H1 (cell line): ENCODE measurements at regions of chr2 and their contacts with region 1.

Region 1: GRCh38 chr2:182866461-182867406 is at the start of gene FRZB:
- DNase-seq: peak; percentile 17 to 77
- H3K4me3 ChIP-seq: peak within 1 kb of the TSS; percentile 48 to 68 (median 54)
- H3K27ac ChIP-seq: no peak within 1 kb of the TSS
- H3K4me1 ChIP-seq: peaks cover 3 to 14% (median 7%) of the 10 kb centered on the region in 4 experiments; a peak in 6 of 7 replicates
- H3K27me3 ChIP-seq: peaks cover 2 to 19% (median 12%) of the 10 kb centered on the region in 4 experiments
- CTCF ChIP-seq: no peak
- EP300 ChIP-seq: no peak
- POLR2A ChIP-seq: no peak
- RAD21 ChIP-seq: no peak; a peak in 1 of 4 replicates
- total RNA-seq, gene FRZB: 4.6 and 4.7 TPM in 2 replicates

Region 2: GRCh38 chr2:182763311-182763912 is 103.3 kb before region 1 on chr2:
- CTCF ChIA-PET with region 1: interaction called, 15 read pairs
- POLR2A ChIA-PET with region 1: interaction called, 3 read pairs
- DNase-seq: no peak
- H3K4me3 ChIP-seq: no peak overlapping the region
- H3K27ac ChIP-seq: no peak overlapping the region
- H3K4me1 ChIP-seq: no peaks in the 10 kb centered on the region
- H3K27me3 ChIP-seq: no peaks in the 10 kb centered on the region
- CTCF ChIP-seq: peak in 2 of 3 experiments; percentile 64; a peak in 3 of 4 replicates
- EP300 ChIP-seq: no peak
- POLR2A ChIP-seq: no peak
- RAD21 ChIP-seq: peak; percentile 40 to 59; a peak in 3 of 4 replicates

Region 3: GRCh38 chr2:182784777-182785176 is 82.0 kb before region 1 on chr2:
- CTCF ChIA-PET with region 1: interaction called, 71 read pairs
- POLR2A ChIA-PET with region 1: no interaction called
- DNase-seq: no peak
- H3K4me3 ChIP-seq: no peak overlapping the region
- H3K27ac ChIP-seq: no peak overlapping the region
- H3K4me1 ChIP-seq: no peaks in the 10 kb centered on the region
- H3K27me3 ChIP-seq: no peaks in the 10 kb centered on the region
- CTCF ChIP-seq: peak in 2 of 3 experiments; percentile 43 to 55; a peak in 2 of 4 replicates
- EP300 ChIP-seq: no peak
- POLR2A ChIP-seq: no peak
- RAD21 ChIP-seq: peak; percentile 77 to 78

Region 4: DNA sequence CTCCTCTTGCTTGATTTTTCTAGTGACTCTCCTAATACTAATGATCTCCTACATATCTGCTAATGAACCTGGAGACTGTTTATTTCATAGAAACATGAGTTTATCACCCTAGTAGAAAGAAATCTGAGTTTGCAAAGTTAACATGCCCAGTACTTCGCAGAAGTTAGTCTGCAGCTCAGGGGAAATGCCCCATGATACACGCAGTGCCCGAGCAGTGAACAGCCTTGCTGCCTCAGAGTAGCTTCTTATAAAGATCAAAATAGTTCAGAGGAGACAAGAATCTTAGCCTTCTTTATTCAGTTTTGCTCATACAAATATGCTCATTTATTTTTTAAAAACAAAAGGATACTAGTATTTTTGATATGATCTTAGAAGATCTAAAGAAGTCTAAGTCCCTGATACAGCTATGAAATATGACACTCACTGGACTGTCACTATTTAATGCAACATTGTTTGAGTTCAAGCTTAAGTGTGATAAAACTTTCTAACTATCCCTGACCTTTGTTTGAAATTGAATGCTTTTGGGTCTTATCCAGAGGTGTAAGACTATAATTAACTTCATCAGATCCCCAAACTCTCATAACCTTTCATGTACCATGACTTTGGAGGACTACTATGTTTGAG is 20.8 kb before region 1 on chr2:
- CTCF ChIA-PET with region 1: interaction called, 45 read pairs
- POLR2A ChIA-PET with region 1: interaction called, 3 read pairs
- DNase-seq: no peak
- H3K4me3 ChIP-seq: no peak overlapping the region
- H3K27ac ChIP-seq: no peak overlapping the region
- H3K4me1 ChIP-seq: no peaks in the 10 kb centered on the region
- H3K27me3 ChIP-seq: peaks cover 0 to 1% (median 0%) of the 10 kb centered on the region in 4 experiments; a peak in 1 of 7 replicates
- CTCF ChIP-seq: no peak
- EP300 ChIP-seq: no peak
- POLR2A ChIP-seq: no peak
- RAD21 ChIP-seq: no peak

Region 5: GRCh38 chr2:182883451-182883850 is 16.7 kb after region 1 on chr2:
- CTCF ChIA-PET with region 1: interaction called, 11 read pairs
- POLR2A ChIA-PET with region 1: interaction called, 3 read pairs
- DNase-seq: no peak
- H3K4me3 ChIP-seq: no peak overlapping the region
- H3K27ac ChIP-seq: no peak overlapping the region
- H3K4me1 ChIP-seq: no peaks in the 10 kb centered on the region
- H3K27me3 ChIP-seq: no peaks in the 10 kb centered on the region
- CTCF ChIP-seq: no peak
- EP300 ChIP-seq: no peak
- POLR2A ChIP-seq: no peak
- RAD21 ChIP-seq: no peak

Region 6: DNA sequence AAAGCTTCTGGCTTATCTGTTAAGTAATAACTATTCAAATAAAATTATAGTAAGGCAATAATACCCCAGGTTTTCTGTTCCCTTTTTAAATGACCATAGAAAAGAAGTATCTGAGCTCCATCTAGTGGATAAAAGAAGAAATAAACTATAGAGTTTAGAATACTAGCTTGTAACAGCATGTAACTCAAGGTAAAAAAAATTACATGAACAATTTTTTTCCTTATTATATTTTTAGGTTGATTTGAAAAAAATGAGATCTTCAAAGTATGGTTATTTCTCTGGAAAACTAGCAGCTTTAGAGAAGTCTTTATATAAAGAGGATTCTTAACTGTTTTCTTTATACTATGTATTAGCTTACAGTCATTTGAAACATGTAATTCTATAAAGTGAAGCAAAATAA is 113.4 kb after region 1 on chr2:
- CTCF ChIA-PET with region 1: interaction called, 14 read pairs
- POLR2A ChIA-PET with region 1: no interaction called
- DNase-seq: no peak
- H3K4me3 ChIP-seq: no peak overlapping the region
- H3K27ac ChIP-seq: no peak overlapping the region
- H3K4me1 ChIP-seq: no peaks in the 10 kb centered on the region
- H3K27me3 ChIP-seq: no peaks in the 10 kb centered on the region
- CTCF ChIP-seq: peak in 2 of 3 experiments; percentile 10 to 18; a peak in 2 of 4 replicates
- EP300 ChIP-seq: no peak
- POLR2A ChIP-seq: no peak
- RAD21 ChIP-seq: peak in 1 of 2 experiments; percentile 42